Psoas muscle (tissue), 8 donors: ENCODE measurements at regions of chrX and their contacts with region 1.

Region 1: DNA sequence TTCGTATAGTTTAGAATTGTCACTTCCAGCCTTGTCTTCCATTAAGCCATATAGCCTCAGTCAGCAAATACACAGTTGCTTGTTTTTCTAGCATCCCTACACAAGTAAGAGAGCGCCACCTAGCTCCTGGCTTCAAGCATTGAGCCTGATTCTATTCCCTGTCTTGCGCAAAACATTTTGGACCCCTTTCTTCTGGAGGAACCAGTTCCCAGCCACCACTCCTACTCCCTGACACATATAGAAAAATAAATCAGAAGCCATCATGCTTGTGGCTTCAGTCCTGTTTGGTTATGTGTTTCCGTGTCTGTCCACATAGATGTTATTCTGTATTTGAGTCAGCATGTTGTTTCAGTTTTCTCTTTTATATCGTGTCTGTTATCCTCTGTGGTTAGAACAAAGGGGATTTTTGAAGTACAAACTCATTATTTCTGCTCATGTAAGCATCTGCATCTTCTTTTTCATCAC is 59.9 kb downstream of the GK start:
- DNase-seq: peak in 1 of 2 donors; percentile 17
- ATAC-seq: peak in 1 of 4 donors; percentile 58
- H3K4me3 ChIP-seq: no peak overlapping the region
- H3K27ac ChIP-seq: no peak overlapping the region
- H3K4me1 ChIP-seq: no peaks in the 10 kb centered on the region
- H3K27me3 ChIP-seq: no peaks in the 10 kb centered on the region
- CTCF ChIP-seq: peak; percentile 44

Region 2: GRCh38 chrX:30570505-30570904 is 142.6 kb before region 1 on chrX:
- intact Hi-C with region 1: loop called (anchors 5 to 10 kb)
- DNase-seq: no peak
- ATAC-seq: no peak
- H3K4me3 ChIP-seq: no peak overlapping the region
- H3K27ac ChIP-seq: no peak overlapping the region
- H3K4me1 ChIP-seq: no peaks in the 10 kb centered on the region
- H3K27me3 ChIP-seq: no peaks in the 10 kb centered on the region
- CTCF ChIP-seq: peak; percentile 69

Region 3: GRCh38 chrX:30795981-30796958 is 83.2 kb after region 1 on chrX:
- intact Hi-C with region 1: no loop called
- DNase-seq: no peak
- ATAC-seq: no peak
- H3K4me3 ChIP-seq: no peak overlapping the region
- H3K27ac ChIP-seq: no peak overlapping the region
- H3K4me1 ChIP-seq: no peaks in the 10 kb centered on the region
- H3K27me3 ChIP-seq: no peaks in the 10 kb centered on the region
- CTCF ChIP-seq: no peak